K562 (cell line): ENCODE measurements at regions of chr1 and their contacts with region 1.

Region 1: GRCh38 chr1:7207875-7208646 is 422.8 kb downstream of the CAMTA1 start:
- DNase-seq: peak; percentile 66 to 75 (median 70)
- ATAC-seq: peak; percentile 98
- H3K4me3 ChIP-seq: no peak overlapping the region
- H3K27ac ChIP-seq: no peak overlapping the region
- H3K4me1 ChIP-seq: no peaks in the 10 kb centered on the region
- H3K27me3 ChIP-seq: no peaks in the 10 kb centered on the region; a peak in 1 of 5 replicates
- CTCF ChIP-seq: peak; percentile 83 to 91 (median 90)
- EP300 ChIP-seq: no peak
- POLR2A ChIP-seq: no peak
- RAD21 ChIP-seq: peak; percentile 33 to 80; a peak in 3 of 4 replicates

Region 2: DNA sequence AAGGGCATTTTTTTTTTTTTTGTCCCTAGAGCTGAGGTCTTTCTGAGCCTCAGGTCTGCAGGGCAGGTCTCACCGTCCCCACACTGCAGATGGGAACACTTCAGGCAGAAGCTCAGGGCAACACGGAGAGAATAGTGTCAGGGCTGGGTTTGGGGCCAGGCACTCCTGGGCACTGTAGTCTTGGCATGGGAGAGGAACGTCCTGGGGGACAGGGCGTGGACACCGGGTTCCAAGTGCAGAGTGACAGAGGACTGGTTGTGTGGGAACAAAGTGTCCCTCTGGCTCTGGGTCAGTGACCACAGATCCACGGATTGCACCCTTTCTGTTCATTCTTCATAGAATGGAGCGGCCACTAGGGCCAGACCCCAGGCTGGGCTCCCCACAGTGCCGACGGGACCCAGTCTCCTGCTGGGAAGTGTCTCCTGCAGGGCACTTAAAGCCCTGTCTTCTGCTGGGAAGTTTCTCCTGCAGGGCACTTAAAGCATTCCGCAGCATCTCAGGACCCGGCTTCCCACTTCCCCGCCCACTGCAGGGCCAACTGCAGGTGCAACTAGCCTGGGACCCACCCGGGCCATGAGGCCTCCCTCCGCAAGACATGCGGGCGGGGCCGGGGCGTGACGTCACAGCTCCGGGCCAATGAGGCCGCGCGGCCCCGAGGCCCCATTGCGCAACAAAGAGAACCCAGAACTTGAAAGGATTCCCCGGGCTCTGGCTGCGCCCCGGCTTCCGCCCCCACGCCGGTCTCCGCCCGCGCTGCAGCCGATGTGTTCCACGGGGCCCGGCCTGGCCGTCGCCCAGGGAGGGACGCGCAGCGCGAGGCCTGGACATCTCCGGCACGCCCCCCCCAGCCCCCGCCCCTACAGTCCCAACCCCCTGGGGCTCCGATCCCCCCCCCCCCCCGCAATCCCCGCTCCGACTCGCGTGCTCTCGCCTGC is 948.3 kb before region 1 on chr1:
- CTCF ChIA-PET with region 1: no interaction called
- POLR2A ChIA-PET with region 1: no interaction called
- in situ Hi-C with region 1: loop called (anchors 25 kb)
- intact Hi-C with region 1: no loop called
- DNase-seq: peak; percentile 90 to 97 (median 94)
- ATAC-seq: peak; percentile 76
- H3K4me3 ChIP-seq: peak overlapping the region; percentile 50
- H3K27ac ChIP-seq: no peak overlapping the region
- H3K4me1 ChIP-seq: peaks cover 0 to 62% of the 10 kb centered on the region in 2 experiments; a peak in 3 of 5 replicates
- H3K27me3 ChIP-seq: peaks cover 0 to 17% of the 10 kb centered on the region in 2 experiments; a peak in 2 of 5 replicates
- CTCF ChIP-seq: no peak
- EP300 ChIP-seq: no peak
- POLR2A ChIP-seq: no peak
- RAD21 ChIP-seq: no peak

Region 3: GRCh38 chr1:7042322-7043190 is 165.5 kb before region 1 on chr1:
- CTCF ChIA-PET with region 1: interaction called, 3 read pairs
- POLR2A ChIA-PET with region 1: interaction called, 6 read pairs
- in situ Hi-C with region 1: no loop called
- intact Hi-C with region 1: loop called (anchors 2 kb)
- DNase-seq: peak; percentile 31 to 57 (median 38)
- ATAC-seq: peak; percentile 83
- H3K4me3 ChIP-seq: no peak overlapping the region
- H3K27ac ChIP-seq: no peak overlapping the region
- H3K4me1 ChIP-seq: no peaks in the 10 kb centered on the region
- H3K27me3 ChIP-seq: peaks cover 20 to 50% of the 10 kb centered on the region in 2 experiments; a peak in 4 of 5 replicates
- CTCF ChIP-seq: peak; percentile 42 to 76 (median 70); a peak in 5 of 6 replicates
- EP300 ChIP-seq: no peak
- POLR2A ChIP-seq: no peak
- RAD21 ChIP-seq: peak in 1 of 2 experiments; percentile 68; a peak in 3 of 4 replicates

Region 4: GRCh38 chr1:7255303-7256058 is 47.4 kb after region 1 on chr1:
- CTCF ChIA-PET with region 1: no interaction called
- POLR2A ChIA-PET with region 1: no interaction called
- in situ Hi-C with region 1: no loop called
- intact Hi-C with region 1: no loop called
- DNase-seq: no peak
- ATAC-seq: no peak
- H3K4me3 ChIP-seq: no peak overlapping the region
- H3K27ac ChIP-seq: no peak overlapping the region
- H3K4me1 ChIP-seq: no peaks in the 10 kb centered on the region
- H3K27me3 ChIP-seq: peaks cover 48 to 59% of the 10 kb centered on the region in 2 experiments
- CTCF ChIP-seq: no peak
- EP300 ChIP-seq: no peak
- POLR2A ChIP-seq: no peak
- RAD21 ChIP-seq: no peak